OCI-LY7 (cell line): ENCODE measurements at regions of chr15 and their contacts with region 1.

Region 1: DNA sequence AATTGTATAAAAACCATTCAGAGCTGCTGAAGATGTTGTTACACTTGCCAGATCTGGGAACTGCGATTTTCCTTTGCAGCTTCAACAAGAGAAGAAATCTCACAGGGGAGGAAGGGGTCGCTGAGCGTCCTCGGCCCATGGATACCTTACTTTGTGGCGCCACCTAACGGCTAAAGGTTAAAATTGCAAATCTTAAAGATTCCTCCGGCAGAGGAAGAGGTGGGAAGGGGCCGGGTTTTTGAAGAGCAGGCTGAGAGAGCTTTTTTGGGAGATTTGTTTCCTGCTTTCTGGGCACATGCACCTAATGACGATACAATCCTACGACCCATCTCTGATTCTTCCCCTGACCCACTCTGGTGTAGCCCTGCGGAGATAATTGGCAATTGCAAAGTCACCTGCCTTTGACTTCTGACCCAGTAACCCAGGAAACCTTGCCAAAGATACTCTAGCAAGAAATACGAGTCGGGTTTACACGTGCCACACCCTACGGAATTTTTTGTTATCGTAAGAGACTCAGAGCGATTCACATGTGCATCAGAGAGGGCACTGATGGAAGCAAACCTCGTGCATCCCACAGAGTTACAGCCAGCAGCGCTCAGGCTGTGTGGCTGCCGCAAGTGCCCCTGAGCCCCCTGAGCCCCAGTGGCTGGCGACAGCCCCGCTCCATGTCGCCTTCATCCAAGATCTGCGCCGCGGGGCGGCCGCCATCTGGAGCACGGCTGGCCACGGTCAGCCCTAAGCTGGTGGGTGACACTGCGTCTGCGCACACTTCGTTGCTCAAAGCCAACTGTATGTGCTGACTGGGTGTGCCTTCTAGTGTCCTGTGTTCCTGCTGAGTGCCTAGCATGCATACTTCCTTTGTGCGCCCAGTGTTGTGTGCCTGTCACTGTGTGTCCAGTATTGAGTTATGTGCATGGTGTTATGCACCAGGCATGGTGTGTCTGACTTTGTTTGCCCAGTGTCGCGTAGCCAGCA is 55.2 kb upstream of the CHRNA7 start:
- DNase-seq: peak; percentile 52
- H3K4me3 ChIP-seq: no peak overlapping the region
- H3K27ac ChIP-seq: no peak overlapping the region
- H3K4me1 ChIP-seq: no peaks in the 10 kb centered on the region
- CTCF ChIP-seq: peak; percentile 91

Region 2: GRCh38 chr15:31867536-31868442 is 107.4 kb before region 1 on chr15:
- CTCF ChIA-PET with region 1: no interaction called
- POLR2A ChIA-PET with region 1: no interaction called
- intact Hi-C with region 1: loop called (anchors 2 kb)
- DNase-seq: peak; percentile 65
- H3K4me3 ChIP-seq: no peak overlapping the region
- H3K27ac ChIP-seq: no peak overlapping the region
- H3K4me1 ChIP-seq: peaks cover 3% of the 10 kb centered on the region
- CTCF ChIP-seq: peak; percentile 89